ENCODE measurements at regions of chr2 and their contacts with region 1.

Region 1: GRCh38 chr2:24084386-24085361 is at the start of gene TP53I3:
- DNase-seq: peak; percentile 80
- H3K4me3 Mint-ChIP-seq: peak within 1 kb of the TSS; percentile 85
- H3K27ac Mint-ChIP-seq: peak within 1 kb of the TSS; percentile 27
- H3K4me1 Mint-ChIP-seq: peaks cover 8% of the 10 kb centered on the region
- H3K27me3 Mint-ChIP-seq: no peaks in the 10 kb centered on the region
- total RNA-seq, gene TP53I3: 0.60 to 0.81 TPM

Region 2: GRCh38 chr2:23824777-23825212 is 259.9 kb before region 1 on chr2:
- CTCF ChIA-PET with region 1: interaction called, 38 read pairs
- intact Hi-C with region 1: loop called (anchors 1 kb)
- DNase-seq: peak; percentile 41
- H3K4me3 Mint-ChIP-seq: no peak overlapping the region
- H3K27ac Mint-ChIP-seq: no peak overlapping the region
- H3K4me1 Mint-ChIP-seq: peaks cover 5% of the 10 kb centered on the region
- H3K27me3 Mint-ChIP-seq: no peaks in the 10 kb centered on the region

Region 3: GRCh38 chr2:23988371-23988770 is 96.3 kb before region 1 on chr2:
- CTCF ChIA-PET with region 1: interaction called, 5 read pairs
- intact Hi-C with region 1: loop called (anchors 1 kb)
- DNase-seq: no peak
- H3K4me3 Mint-ChIP-seq: no peak overlapping the region
- H3K27ac Mint-ChIP-seq: no peak overlapping the region
- H3K4me1 Mint-ChIP-seq: no peaks in the 10 kb centered on the region
- H3K27me3 Mint-ChIP-seq: no peaks in the 10 kb centered on the region

Region 4: GRCh38 chr2:24046930-24047702 is 37.6 kb before region 1 on chr2 and contains the start of gene WDCP:
- CTCF ChIA-PET with region 1: interaction called, 7 read pairs
- intact Hi-C with region 1: loop called (anchors 2 kb)
- DNase-seq: peak; percentile 98
- H3K4me3 Mint-ChIP-seq: peak within 1 kb of the TSS; percentile 95
- H3K27ac Mint-ChIP-seq: peak within 1 kb of the TSS; percentile 80
- H3K4me1 Mint-ChIP-seq: peaks cover 22% of the 10 kb centered on the region
- H3K27me3 Mint-ChIP-seq: peaks cover 7% of the 10 kb centered on the region
- total RNA-seq, gene WDCP: 17.6 to 21.1 TPM

Region 5: DNA sequence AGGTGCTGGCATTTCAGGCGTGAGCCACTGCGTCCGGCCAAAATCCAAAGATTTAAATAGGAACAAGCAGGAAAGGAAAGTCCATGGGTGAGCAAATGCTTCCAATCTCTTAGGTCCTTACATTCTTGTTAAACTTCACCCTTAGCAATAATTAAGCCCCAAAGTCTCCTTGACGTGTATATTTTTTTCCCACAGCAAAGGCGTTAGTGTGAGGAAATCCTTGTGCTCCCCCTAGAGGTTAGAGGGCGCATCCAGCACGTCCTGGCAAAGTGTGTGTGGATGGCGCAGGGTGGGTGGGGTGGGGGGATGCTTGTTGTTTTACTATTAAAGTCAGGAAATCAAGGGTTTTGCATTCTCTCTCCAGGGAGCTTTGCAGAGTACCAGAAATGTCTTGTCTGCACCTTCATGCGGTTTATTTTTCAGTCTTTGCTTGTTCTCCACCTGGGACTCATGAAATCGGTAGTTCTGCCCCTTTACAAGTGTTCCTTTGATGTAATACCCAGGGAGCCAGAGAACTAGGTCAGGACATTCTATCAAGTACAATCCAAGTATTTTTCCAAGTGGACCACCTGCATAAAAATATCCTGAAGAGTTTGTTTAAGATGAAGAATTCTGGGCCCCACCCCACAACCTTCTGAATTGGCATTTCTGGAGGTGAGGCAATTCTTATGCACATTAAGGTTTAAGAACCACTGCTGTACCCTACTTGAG is 297.8 kb after region 1 on chr2:
- CTCF ChIA-PET with region 1: interaction called, 3 read pairs
- intact Hi-C with region 1: loop called (anchors 1 kb)
- DNase-seq: peak; percentile 74
- H3K4me3 Mint-ChIP-seq: no peak overlapping the region
- H3K27ac Mint-ChIP-seq: no peak overlapping the region
- H3K4me1 Mint-ChIP-seq: no peaks in the 10 kb centered on the region
- H3K27me3 Mint-ChIP-seq: no peaks in the 10 kb centered on the region